ENCODE measurements at regions of chr3 and their contacts with region 1.

Region 1: GRCh38 chr3:155912579-155913190 is 42.2 kb downstream of the GMPS start:
- DNase-seq: no peak
- ATAC-seq: no peak
- H3K4me3 Mint-ChIP-seq: no peak overlapping the region
- H3K27ac Mint-ChIP-seq: no peak overlapping the region
- H3K4me1 Mint-ChIP-seq: peaks cover 6% of the 10 kb centered on the region
- H3K27me3 Mint-ChIP-seq: no peaks in the 10 kb centered on the region

Region 2: GRCh38 chr3:154285221-154285620 is 1627.5 kb before region 1 on chr3:
- CTCF ChIA-PET with region 1: no interaction called
- POLR2A ChIA-PET with region 1: no interaction called
- intact Hi-C with region 1: loop called in 1 of 2 experiments (anchors 10 kb)
- DNase-seq: no peak
- ATAC-seq: no peak
- H3K4me3 Mint-ChIP-seq: no peak overlapping the region
- H3K27ac Mint-ChIP-seq: peak overlapping the region; percentile 47
- H3K4me1 Mint-ChIP-seq: no peaks in the 10 kb centered on the region
- H3K27me3 Mint-ChIP-seq: no peaks in the 10 kb centered on the region

Region 3: GRCh38 chr3:155382396-155383042 is 530.2 kb before region 1 on chr3:
- CTCF ChIA-PET with region 1: no interaction called
- POLR2A ChIA-PET with region 1: no interaction called
- intact Hi-C with region 1: no loop called
- DNase-seq: peak; percentile 51
- ATAC-seq: no peak
- H3K4me3 Mint-ChIP-seq: no peak overlapping the region
- H3K27ac Mint-ChIP-seq: no peak overlapping the region
- H3K4me1 Mint-ChIP-seq: no peaks in the 10 kb centered on the region
- H3K27me3 Mint-ChIP-seq: no peaks in the 10 kb centered on the region

Measured in activated CD4-positive, alpha-beta T cell treated with anti-CD3 and anti-CD28 coated beads for 36 hours (primary cell).